ENCODE measurements at regions of chr11 and their contacts with region 1.

Region 1: GRCh38 chr11:96342961-96343711 is at the start of gene MAML2:
- DNase-seq: peak; percentile 84 to 86
- ATAC-seq: peak; percentile 90 to 93
- H3K4me3 ChIP-seq: peak within 1 kb of the TSS; percentile 60 to 79 (median 64)
- H3K27ac ChIP-seq: peak within 1 kb of the TSS; percentile 63 to 74 (median 66)
- H3K4me1 ChIP-seq: peaks cover 3 to 4% of the 10 kb centered on the region in 2 donors
- H3K27me3 ChIP-seq: no peaks in the 10 kb centered on the region
- CTCF ChIP-seq: peak; percentile 53 to 94 (median 72)
- POLR2A ChIP-seq: peak in 1 of 2 donors; percentile 9
- total RNA-seq, gene MAML2: 4.1 to 6.3 (median 4.8) TPM

Region 2: GRCh38 chr11:95835768-95836488 is 507.2 kb before region 1 on chr11:
- in situ Hi-C with region 1: no loop called
- intact Hi-C with region 1: loop called (anchors 1 kb)
- DNase-seq: peak; percentile 19 to 57
- ATAC-seq: peak; percentile 92 to 99
- H3K4me3 ChIP-seq: no peak overlapping the region
- H3K27ac ChIP-seq: peak overlapping the region in 3 of 4 donors; percentile 5 to 22 (median 15)
- H3K4me1 ChIP-seq: peaks cover 0 to 8% of the 10 kb centered on the region in 2 donors
- H3K27me3 ChIP-seq: no peaks in the 10 kb centered on the region
- CTCF ChIP-seq: peak; percentile 61 to 87 (median 74)
- POLR2A ChIP-seq: no peak

Region 3: GRCh38 chr11:95923728-95924413 is 419.3 kb before region 1 on chr11 and contains the start of gene MTMR2:
- in situ Hi-C with region 1: no loop called
- intact Hi-C with region 1: loop called (anchors 5 kb)
- DNase-seq: peak; percentile 54 to 66
- ATAC-seq: peak; percentile 91 to 92
- H3K4me3 ChIP-seq: peak within 1 kb of the TSS; percentile 75 to 97 (median 87)
- H3K27ac ChIP-seq: peak within 1 kb of the TSS; percentile 91 to 93 (median 92)
- H3K4me1 ChIP-seq: peaks cover 10 to 18% of the 10 kb centered on the region in 2 donors
- H3K27me3 ChIP-seq: no peaks in the 10 kb centered on the region
- CTCF ChIP-seq: no peak
- POLR2A ChIP-seq: peak; percentile 51 to 67
- total RNA-seq, gene MTMR2: 4.0 to 5.3 (median 4.5) TPM

Region 4: GRCh38 chr11:96004862-96005261 is 338.3 kb before region 1 on chr11:
- in situ Hi-C with region 1: no loop called
- intact Hi-C with region 1: loop called (anchors 2 kb)
- DNase-seq: no peak
- ATAC-seq: no peak
- H3K4me3 ChIP-seq: no peak overlapping the region
- H3K27ac ChIP-seq: no peak overlapping the region
- H3K4me1 ChIP-seq: peaks cover 0 to 9% of the 10 kb centered on the region in 2 donors
- H3K27me3 ChIP-seq: no peaks in the 10 kb centered on the region
- CTCF ChIP-seq: no peak
- POLR2A ChIP-seq: no peak

Region 5: DNA sequence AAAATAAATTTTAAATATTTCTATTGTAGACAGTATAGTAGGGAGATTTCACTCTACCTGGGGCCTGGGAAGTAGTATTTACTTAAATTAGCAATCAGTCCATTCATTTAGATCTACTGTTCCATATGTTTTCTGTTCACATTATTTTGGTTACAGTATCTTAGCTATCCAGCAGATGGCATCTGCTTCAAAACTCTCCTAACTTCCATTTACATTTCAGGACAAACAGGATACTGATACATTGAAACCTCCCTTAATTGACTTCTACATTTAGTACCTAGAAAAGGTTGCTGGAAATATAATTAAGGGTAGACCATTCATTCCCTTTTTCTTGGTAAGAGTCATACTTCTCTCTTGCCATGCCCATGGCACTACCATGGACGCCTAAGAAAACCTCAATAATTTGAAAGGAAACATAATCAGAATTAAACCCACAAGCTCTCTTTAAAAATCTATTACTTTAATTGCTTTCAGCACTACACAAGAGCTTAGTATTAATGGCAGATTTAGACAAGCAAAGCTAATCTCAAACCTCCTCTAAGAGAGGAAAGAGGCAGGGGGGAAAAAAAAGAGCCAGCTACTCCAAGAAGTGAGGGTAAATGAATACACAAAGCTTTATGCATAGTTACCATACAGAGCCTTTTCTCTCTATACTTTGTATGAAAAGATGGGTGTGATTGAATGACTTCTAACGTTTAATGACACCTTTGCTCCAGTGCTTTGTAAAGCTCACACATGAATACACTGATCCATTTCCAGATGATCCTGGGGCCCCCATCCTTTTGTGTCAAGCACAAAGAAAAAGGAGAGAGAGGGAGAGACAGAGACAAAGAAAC is 288.0 kb before region 1 on chr11:
- in situ Hi-C with region 1: loop called (anchors 5 to 25 kb)
- intact Hi-C with region 1: loop called (anchors 1 kb)
- DNase-seq: no peak
- ATAC-seq: no peak
- H3K4me3 ChIP-seq: no peak overlapping the region
- H3K27ac ChIP-seq: no peak overlapping the region
- H3K4me1 ChIP-seq: peaks cover 0 to 6% of the 10 kb centered on the region in 2 donors
- H3K27me3 ChIP-seq: no peaks in the 10 kb centered on the region
- CTCF ChIP-seq: peak; percentile 38 to 55 (median 46)
- POLR2A ChIP-seq: no peak

Region 6: GRCh38 chr11:96213500-96213899 is 129.6 kb before region 1 on chr11:
- in situ Hi-C with region 1: no loop called
- intact Hi-C with region 1: loop called (anchors 5 kb)
- DNase-seq: no peak
- ATAC-seq: peak in 1 of 2 donors; percentile 47
- H3K4me3 ChIP-seq: no peak overlapping the region
- H3K27ac ChIP-seq: peak overlapping the region; percentile 56 to 68 (median 65)
- H3K4me1 ChIP-seq: peaks cover 13 to 26% of the 10 kb centered on the region in 2 donors
- H3K27me3 ChIP-seq: no peaks in the 10 kb centered on the region
- CTCF ChIP-seq: no peak
- POLR2A ChIP-seq: no peak

Measured in gastrocnemius medialis (tissue), 4 donors.